Activated CD4-positive, alpha-beta T cell treated with anti-CD3 and anti-CD28 coated beads, Interleukin-2, amount 10 ng/mL, durations not matched to agents 7 days and 5 days (primary cell): ENCODE measurements at regions of chr1 and their contacts with region 1.

Region 1: GRCh38 chr1:109773146-109773899 is 9.6 kb upstream of the EPS8L3 start:
- DNase-seq: peak; percentile 82
- H3K4me3 Mint-ChIP-seq: no peak overlapping the region
- H3K27ac Mint-ChIP-seq: no peak overlapping the region
- H3K4me1 Mint-ChIP-seq: peaks cover 20% of the 10 kb centered on the region
- H3K27me3 Mint-ChIP-seq: peaks cover 13% of the 10 kb centered on the region

Region 2: DNA sequence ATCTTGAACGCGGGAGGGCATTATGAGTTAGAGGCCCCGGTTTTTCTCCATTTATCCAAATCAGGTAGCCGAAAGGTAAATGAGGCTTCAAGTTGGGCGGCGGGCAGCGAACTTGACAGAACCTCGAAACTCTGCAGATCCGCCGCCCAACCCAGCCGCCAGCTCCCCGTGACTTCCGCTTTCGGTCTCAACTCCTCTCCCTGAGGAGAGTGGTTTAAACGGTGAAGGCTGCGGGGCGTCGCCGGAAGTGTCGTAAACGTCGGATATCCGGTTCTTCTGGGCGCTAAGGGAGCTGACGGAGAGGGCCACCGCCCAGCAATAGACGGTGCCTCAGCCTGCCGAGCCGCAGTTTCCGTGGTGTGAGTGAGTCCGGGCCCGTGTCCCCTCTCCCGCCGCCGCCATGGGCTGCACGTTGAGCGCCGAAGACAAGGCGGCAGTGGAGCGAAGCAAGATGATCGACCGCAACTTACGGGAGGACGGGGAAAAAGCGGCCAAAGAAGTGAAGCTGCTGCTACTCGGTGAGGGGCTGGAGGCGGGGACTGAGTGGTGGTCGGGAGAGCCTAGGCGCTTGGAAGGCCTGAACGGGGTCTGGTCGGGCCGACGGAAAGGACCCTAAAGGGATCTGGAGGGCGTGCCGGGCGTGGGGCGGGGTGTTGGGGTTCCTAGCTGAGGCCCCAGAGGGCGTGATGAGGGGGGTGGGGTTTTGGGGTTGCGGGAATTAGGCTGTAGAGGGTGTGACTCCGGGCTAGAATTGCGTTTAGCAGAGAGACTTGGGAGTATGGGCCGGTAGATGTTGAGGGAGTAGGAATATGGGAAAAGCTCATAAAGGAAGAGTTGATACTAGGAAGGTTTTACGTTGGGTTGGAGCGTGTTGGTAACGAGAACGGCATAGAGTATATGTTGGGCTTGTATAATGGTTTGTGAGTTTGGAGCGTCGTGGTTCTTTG is 224.7 kb before region 1 on chr1 and contains the start of gene GNAI3:
- CTCF ChIA-PET with region 1: interaction called, 17 read pairs
- POLR2A ChIA-PET with region 1: interaction called, 3 read pairs
- DNase-seq: peak; percentile 98
- H3K4me3 Mint-ChIP-seq: peak within 1 kb of the TSS; percentile 96
- H3K27ac Mint-ChIP-seq: peak within 1 kb of the TSS; percentile 98
- H3K4me1 Mint-ChIP-seq: peaks cover 49% of the 10 kb centered on the region
- H3K27me3 Mint-ChIP-seq: no peaks in the 10 kb centered on the region
- total RNA-seq, gene GNAI3: 8.8 to 9.7 TPM

Region 3: DNA sequence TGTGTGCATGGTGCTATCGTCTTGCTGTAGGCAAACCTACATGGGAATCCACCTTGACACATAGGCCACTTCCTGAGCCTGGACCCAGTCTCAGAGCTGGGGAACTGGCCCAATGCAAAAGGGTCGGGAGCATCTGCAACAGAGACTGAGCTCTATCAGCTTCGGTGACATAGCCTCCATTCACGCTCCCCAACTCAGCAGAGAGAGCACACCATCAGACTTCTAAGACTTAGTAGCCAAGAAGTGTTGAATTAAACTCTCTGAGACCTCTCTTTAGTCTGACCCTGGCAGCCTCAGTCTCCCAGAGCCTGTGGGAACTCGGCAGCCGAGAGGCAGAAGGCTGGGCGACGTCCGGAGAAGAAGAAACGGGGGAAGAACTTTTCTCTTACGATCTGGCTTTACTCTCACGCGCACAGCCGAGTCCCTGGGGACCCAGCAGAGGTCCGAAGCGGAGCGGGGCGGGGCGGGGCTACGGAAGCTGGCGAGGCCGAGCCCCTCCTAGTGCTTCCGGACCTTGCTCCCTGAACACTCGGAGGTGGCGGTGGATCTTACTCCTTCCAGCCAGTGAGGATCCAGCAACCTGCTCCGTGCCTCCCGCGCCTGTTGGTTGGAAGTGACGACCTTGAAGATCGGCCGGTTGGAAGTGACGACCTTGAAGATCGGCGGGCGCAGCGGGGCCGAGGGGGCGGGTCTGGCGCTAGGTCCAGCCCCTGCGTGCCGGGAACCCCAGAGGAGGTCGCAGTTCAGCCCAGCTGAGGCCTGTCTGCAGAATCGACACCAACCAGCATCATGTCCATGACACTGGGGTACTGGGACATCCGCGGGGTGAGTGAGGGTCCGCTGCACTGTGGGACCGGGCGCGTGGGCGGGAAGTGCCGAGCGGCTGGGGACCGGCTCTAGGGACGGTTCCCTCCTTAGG is 117.5 kb before region 1 on chr1 and contains the start of gene GSTM4:
- CTCF ChIA-PET with region 1: interaction called, 10 read pairs
- POLR2A ChIA-PET with region 1: no interaction called
- DNase-seq: peak; percentile 76
- H3K4me3 Mint-ChIP-seq: peak within 1 kb of the TSS; percentile 82
- H3K27ac Mint-ChIP-seq: peak within 1 kb of the TSS; percentile 91
- H3K4me1 Mint-ChIP-seq: peaks cover 26% of the 10 kb centered on the region
- H3K27me3 Mint-ChIP-seq: peaks cover 21% of the 10 kb centered on the region
- total RNA-seq, gene GSTM4: 34.3 to 36.3 TPM

Region 4: DNA sequence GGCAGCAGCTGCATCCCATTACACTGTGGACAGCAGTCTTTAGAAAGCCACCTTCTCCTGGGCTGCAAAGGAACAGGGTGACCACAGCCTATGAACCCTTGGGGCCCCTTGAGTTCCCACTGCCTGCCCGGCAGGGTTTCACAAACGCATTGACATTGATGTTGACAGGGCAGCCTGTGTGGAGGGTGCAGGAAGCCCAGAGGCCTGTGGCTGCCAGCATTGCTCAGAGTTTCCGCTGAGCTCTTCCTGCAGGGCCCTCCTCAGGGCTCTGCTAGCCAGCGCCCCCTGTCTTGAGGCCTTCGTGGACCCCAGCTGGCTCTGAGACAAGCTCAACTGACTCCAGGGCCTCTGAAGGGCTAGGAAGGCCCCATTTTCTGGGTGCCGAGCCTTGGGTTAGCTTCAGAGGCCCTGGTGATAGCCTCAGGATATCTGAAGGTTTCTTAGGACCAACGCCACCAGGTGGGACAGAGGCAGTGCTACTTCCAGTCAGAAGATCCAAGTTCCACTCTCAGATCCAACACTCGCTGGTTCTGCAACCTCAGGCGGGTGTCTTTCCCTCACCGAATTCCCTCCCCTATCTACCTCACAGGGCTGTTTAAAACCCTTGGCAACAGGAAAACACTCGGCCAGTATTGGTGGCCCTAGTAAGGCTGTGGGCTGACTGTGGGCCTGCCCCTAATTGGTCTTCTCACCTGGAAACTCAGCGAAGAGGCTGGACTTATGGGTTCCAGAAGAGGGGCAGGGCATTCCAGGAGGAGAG is 17.6 kb after region 1 on chr1:
- CTCF ChIA-PET with region 1: interaction called, 120 read pairs
- POLR2A ChIA-PET with region 1: no interaction called
- DNase-seq: peak; percentile 83
- H3K4me3 Mint-ChIP-seq: no peak overlapping the region
- H3K27ac Mint-ChIP-seq: peak overlapping the region; percentile 94
- H3K4me1 Mint-ChIP-seq: peaks cover 83% of the 10 kb centered on the region
- H3K27me3 Mint-ChIP-seq: no peaks in the 10 kb centered on the region

Region 5: DNA sequence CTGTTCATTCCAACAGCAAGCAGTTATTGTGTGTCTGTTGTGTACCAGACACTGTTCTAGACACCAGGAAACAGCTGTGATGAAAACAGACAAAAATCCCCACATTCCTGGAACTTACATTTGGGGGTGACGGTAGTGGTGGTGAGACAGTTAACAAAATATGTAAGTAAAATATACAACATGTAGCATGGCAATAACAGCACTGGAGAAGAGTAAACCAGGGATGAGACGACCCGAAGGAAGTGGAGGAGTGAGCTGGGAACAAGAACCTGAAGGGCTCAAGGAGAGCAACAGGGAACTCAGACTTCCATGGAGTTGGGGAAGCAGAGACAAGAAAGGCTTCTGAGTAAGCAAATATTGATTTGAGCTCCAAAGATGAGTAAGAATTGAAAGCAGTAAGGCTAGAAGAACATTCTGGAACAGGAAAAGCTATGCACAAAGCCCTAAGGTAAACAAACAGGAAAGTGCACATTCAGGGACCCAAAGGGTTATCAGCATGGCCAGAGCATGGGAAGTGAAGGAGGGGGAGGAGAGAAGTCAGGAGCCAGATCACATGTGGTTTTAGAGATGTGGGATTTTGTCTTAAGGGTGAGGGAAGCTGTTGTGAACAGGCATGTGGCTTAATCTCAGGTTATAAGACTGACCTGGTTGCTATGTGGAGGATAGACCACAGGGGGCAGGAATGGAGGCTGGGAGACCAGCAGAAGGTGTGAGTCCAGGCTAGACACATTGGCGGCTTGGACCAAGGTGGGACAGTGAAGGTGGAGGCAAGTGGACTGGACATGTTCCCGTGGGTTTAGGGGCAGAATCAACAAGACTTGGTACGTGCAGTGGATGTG is 144.7 kb after region 1 on chr1:
- CTCF ChIA-PET with region 1: interaction called, 38 read pairs
- POLR2A ChIA-PET with region 1: no interaction called
- DNase-seq: no peak
- H3K4me3 Mint-ChIP-seq: no peak overlapping the region
- H3K27ac Mint-ChIP-seq: no peak overlapping the region
- H3K4me1 Mint-ChIP-seq: peaks cover 15% of the 10 kb centered on the region
- H3K27me3 Mint-ChIP-seq: no peaks in the 10 kb centered on the region

Region 6: GRCh38 chr1:110011527-110012041 is 238.3 kb after region 1 on chr1:
- CTCF ChIA-PET with region 1: interaction called, 16 read pairs
- POLR2A ChIA-PET with region 1: no interaction called
- DNase-seq: peak; percentile 60
- H3K4me3 Mint-ChIP-seq: no peak overlapping the region
- H3K27ac Mint-ChIP-seq: peak overlapping the region; percentile 68
- H3K4me1 Mint-ChIP-seq: peaks cover 7% of the 10 kb centered on the region
- H3K27me3 Mint-ChIP-seq: no peaks in the 10 kb centered on the region